ENCODE measurements at regions of chr9 and their contacts with region 1.

Region 1: DNA sequence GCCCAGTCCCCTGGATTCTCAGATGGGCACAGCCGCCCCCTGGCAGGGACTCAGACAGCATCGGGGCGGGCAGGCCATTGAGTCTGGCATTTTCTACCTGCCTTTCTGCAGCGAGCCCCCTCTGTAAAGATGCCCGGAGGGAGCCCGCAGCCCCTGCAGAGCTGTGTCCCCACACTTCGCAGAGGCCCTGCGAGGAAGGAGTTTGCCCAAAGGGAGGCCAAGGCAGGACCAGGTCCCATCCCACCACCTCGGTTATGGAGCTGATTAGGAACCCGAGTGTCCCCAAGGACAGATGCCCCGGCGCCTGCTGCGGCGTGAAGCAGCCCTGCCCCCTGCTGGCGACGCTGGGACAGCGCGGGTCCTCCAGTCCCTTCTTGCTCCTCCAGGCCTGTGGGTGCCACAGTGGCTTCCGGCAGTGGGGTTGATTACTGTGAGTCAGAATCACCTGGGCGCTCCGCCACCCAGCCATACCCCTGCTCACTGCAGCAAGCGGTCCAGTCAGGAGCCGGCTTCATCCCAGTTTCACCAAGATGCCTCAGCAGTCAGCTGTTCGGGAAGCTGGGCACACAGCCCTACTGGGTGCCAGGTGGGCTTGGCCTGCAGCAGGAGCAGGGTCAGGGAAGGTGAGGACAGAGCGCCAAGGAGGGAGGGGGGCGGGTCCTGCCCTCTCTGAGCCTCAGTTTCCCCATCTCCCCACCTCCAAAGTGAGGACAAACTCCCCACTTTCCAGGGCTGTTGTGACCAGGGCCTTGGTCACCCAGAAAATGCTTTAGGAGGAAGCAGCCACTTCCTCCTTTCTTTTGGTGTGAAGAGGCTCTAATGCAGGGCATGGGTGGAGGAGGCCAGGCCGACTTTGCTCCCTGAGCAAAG is 117.1 kb downstream of the RXRA start:
- DNase-seq: peak; percentile 93
- H3K4me3 Mint-ChIP-seq: no peak overlapping the region
- H3K27ac Mint-ChIP-seq: no peak overlapping the region
- H3K4me1 Mint-ChIP-seq: peaks cover 10% of the 10 kb centered on the region
- H3K27me3 Mint-ChIP-seq: peaks cover 6% of the 10 kb centered on the region

Region 2: DNA sequence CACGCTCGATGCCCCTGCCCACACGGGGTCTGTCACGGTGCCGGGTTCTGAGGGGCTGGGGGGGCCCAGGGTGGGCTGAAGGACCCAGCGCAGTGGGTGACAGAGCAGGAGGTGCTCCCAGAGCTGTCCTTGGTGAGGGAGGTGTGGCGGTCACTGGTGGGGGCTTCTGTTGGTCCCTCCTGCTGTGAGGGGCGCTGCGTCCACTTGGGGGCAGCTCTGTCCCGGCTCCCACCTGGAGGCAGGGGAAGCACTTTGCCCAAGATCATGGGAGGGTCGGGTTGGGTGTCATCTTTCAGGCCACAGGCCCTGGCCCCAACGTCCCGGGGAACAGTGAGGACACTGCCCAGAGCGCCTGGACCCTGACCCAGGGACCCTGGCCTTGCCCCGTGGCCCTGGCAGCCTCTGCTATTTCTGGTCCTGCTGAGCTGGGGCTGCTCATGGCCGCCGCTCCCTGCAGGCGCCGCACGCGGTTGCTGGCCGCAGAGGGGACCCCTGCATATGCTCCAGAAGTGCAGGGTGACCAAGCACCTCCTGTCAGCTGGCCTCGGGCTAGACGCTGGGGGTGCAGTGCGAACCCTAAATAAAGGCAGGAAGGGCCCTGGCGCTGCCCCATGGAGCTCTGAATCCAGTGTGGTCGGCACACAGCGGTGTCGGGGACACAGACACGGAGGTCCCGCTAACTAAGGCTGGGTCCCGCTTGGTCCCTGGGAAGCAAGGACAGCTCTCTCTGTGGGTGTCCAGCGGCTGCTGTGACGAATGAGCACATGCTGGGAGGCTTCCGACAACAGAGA is 267.4 kb before region 1 on chr9:
- CTCF ChIA-PET with region 1: interaction called, 60 read pairs
- POLR2A ChIA-PET with region 1: no interaction called
- intact Hi-C with region 1: no loop called
- DNase-seq: no peak
- H3K4me3 Mint-ChIP-seq: no peak overlapping the region
- H3K27ac Mint-ChIP-seq: no peak overlapping the region
- H3K4me1 Mint-ChIP-seq: peaks cover 2% of the 10 kb centered on the region
- H3K27me3 Mint-ChIP-seq: peaks cover 4% of the 10 kb centered on the region

Region 3: DNA sequence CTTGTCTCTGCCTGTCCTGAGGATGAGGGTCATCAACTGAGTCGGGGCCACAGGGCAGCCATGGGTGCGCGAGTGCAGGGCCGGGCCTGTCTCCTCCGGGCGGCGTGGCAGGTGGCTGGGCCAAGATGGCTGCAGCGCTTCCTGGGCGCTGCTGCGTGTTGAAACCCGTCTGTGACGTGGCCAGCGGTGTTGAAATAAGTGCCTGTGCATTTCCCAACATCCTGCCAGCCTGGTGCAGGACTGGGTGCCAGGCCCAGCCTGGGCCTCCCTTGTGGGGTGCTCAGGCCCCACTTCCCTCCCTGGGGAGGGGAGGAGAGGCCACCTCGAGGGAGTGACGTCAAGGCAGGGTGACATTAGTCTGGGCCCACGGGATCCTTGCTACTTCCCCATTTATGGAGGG is 71.7 kb before region 1 on chr9:
- CTCF ChIA-PET with region 1: interaction called, 14 read pairs
- POLR2A ChIA-PET with region 1: no interaction called
- intact Hi-C with region 1: loop called (anchors 2 kb)
- DNase-seq: no peak
- H3K4me3 Mint-ChIP-seq: no peak overlapping the region
- H3K27ac Mint-ChIP-seq: no peak overlapping the region
- H3K4me1 Mint-ChIP-seq: no peaks in the 10 kb centered on the region
- H3K27me3 Mint-ChIP-seq: no peaks in the 10 kb centered on the region

Region 4: DNA sequence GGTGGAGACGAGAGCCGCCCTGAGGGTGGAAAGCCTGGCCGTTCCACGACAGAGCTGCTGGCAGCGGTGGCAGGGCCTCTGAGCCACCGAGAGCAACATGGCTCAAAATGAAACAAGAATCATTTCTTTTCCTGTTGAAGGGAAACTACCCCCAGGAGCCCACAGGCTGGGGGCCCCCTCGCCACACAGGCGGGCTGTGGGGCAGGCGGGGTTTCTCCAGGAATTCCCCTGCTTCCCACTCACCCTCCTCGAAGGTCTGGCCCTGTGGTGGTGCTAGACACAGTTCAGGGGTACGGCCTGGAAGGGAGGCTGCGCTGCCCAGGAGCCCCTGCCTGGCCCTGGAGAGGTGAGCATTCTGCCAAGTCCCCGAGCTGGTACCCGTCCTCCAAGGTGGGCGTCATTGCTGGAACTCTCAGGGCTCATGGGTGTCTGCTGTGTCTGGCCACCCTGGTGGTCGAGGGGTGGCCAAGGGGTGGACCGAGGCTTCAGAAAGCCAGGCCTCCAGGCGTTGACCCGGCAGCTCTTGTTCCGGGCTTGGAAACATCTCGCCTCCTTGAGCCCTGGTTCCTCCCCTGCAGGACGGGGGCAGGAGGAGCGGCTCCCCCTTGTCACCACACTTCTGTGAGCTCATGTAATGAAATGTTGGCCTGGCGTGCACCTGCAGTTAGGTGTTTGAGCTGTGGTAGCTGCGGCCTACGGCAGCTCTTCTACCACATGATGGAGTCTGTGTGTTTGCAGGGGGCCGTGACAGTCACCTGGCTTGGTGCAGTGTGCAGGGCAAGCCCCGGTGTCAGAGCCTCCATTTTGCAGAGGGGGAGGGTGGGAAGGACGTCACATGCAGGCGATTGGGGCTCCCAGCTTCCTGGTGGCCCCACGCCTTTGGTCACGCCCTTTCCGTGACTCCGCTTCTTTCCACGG is 51.8 kb before region 1 on chr9:
- CTCF ChIA-PET with region 1: interaction called, 7 read pairs
- POLR2A ChIA-PET with region 1: no interaction called
- intact Hi-C with region 1: loop called (anchors 1 kb)
- DNase-seq: peak; percentile 93
- H3K4me3 Mint-ChIP-seq: peak overlapping the region; percentile 78
- H3K27ac Mint-ChIP-seq: peak overlapping the region; percentile 96
- H3K4me1 Mint-ChIP-seq: peaks cover 60% of the 10 kb centered on the region
- H3K27me3 Mint-ChIP-seq: peaks cover 3% of the 10 kb centered on the region

Region 5: GRCh38 chr9:135440620-135441019 is 997.2 kb after region 1 on chr9:
- CTCF ChIA-PET with region 1: no interaction called
- POLR2A ChIA-PET with region 1: no interaction called
- intact Hi-C with region 1: no loop called
- DNase-seq: no peak
- H3K4me3 Mint-ChIP-seq: no peak overlapping the region
- H3K27ac Mint-ChIP-seq: no peak overlapping the region
- H3K4me1 Mint-ChIP-seq: no peaks in the 10 kb centered on the region
- H3K27me3 Mint-ChIP-seq: peaks cover 18% of the 10 kb centered on the region